AG04449 (cell line): ENCODE measurements at regions of chr11 and their contacts with region 1.

Region 1: GRCh38 chr11:13343931-13344717 is 66.5 kb downstream of the BMAL1 start:
- DNase-seq: no peak
- H3K4me3 ChIP-seq: no peak overlapping the region
- CTCF ChIP-seq: peak; percentile 70

Region 2: GRCh38 chr11:13183094-13183825 is 160.9 kb before region 1 on chr11:
- CTCF ChIA-PET with region 1: interaction called, 11 read pairs
- POLR2A ChIA-PET with region 1: no interaction called
- DNase-seq: peak; percentile 36
- H3K4me3 ChIP-seq: peak overlapping the region; percentile 28
- CTCF ChIP-seq: peak; percentile 24

Region 3: DNA sequence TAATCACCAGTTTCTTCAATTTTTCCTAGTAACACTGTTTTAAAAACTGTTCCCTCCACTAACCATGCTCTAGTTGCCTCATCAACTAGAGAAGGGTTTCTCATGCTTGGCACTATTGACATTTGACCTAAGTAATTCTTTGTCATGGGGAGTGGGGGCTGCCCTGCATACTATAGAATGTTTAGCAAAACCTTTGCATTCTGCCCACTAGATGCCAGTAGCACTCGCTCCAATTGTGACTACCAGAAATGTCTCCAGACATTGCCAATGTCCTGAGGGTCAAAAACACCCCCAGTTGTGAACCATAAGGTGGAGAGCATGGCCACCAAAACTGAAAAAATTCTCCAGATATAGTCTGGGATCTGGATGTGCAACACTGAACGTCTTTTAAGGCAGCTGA is 94.1 kb before region 1 on chr11:
- CTCF ChIA-PET with region 1: interaction called, 33 read pairs
- POLR2A ChIA-PET with region 1: no interaction called
- DNase-seq: no peak
- H3K4me3 ChIP-seq: no peak overlapping the region
- CTCF ChIP-seq: peak; percentile 27

Region 4: GRCh38 chr11:13287036-13287435 is 57.1 kb before region 1 on chr11:
- CTCF ChIA-PET with region 1: interaction called, 10 read pairs
- POLR2A ChIA-PET with region 1: no interaction called
- DNase-seq: no peak
- H3K4me3 ChIP-seq: no peak overlapping the region
- CTCF ChIP-seq: no peak

Region 5: DNA sequence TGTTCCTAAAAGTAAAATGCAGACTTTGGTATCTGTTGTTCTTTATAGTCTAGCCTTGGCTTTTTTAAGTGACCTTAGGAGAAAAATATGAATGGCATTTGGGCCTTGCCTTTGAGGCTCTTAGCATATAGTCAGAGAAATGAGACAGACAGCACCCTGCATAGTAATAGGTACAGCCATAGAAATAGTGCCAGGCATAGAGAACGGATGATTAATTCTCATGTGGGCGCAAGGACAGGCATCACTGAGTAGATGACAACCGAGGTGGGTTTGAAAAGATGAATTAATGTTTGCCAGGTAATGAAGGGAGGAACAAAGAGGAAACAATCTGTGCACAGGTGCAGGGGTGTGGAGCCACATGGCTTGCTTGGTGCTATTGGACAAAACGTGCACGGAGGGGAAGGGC is 23.9 kb after region 1 on chr11:
- CTCF ChIA-PET with region 1: interaction called, 16 read pairs
- POLR2A ChIA-PET with region 1: no interaction called
- DNase-seq: peak; percentile 29
- H3K4me3 ChIP-seq: no peak overlapping the region
- CTCF ChIP-seq: no peak